Body of pancreas (tissue), 4 donors: ENCODE measurements at regions of chr19 and their contacts with region 1.

Region 1: GRCh38 chr19:44657211-44657921 is 13.7 kb downstream of the PVR start:
- DNase-seq: peak; percentile 60 to 75 (median 68)
- ATAC-seq: peak; percentile 71
- H3K4me3 ChIP-seq: no peak overlapping the region
- H3K27ac ChIP-seq: no peak overlapping the region
- H3K4me1 ChIP-seq: no peaks in the 10 kb centered on the region
- H3K27me3 ChIP-seq: no peaks in the 10 kb centered on the region
- CTCF ChIP-seq: peak; percentile 74 to 94 (median 85)
- POLR2A ChIP-seq: no peak

Region 2: DNA sequence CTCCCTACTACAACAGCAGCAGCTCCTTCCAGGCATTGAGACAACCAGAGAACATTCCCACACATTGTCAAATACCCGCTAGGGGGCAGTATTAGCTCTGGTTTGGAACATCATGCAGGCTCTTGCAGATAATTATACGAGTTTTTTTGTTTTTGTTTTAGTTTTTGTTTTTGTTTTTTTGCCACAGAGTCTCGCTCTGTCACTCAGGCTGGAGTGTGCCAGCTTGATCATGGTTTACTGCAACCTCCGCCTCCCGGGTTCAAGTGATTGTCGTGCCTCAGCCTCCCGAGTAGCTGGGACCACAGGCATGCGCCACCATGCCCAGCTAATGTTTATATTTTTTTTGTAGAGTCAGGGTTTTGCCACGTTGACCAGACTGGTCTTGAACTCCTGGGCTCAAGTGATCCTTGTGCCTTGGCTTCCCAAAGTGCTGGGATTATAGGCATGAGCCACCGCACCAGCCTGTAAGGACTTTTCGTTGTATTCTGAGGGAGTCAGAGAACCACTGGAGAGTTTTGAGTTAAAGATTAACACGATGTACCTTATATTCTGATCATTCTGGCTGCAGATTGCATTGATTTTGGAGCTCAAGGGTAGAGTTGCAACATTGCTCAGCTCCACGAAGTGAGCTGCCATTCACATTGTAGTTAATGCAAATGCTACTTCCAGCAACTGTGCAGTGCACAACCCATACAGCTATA is 86.2 kb before region 1 on chr19:
- intact Hi-C with region 1: loop called (anchors 5 kb)
- DNase-seq: peak; percentile 74 to 85 (median 79)
- ATAC-seq: peak; percentile 80
- H3K4me3 ChIP-seq: no peak overlapping the region
- H3K27ac ChIP-seq: no peak overlapping the region
- H3K4me1 ChIP-seq: no peaks in the 10 kb centered on the region
- H3K27me3 ChIP-seq: peaks cover 0 to 4% of the 10 kb centered on the region in 2 donors
- CTCF ChIP-seq: peak; percentile 53 to 83 (median 76)
- POLR2A ChIP-seq: no peak

Region 3: GRCh38 chr19:44725251-44725650 is 67.9 kb after region 1 on chr19:
- intact Hi-C with region 1: no loop called
- DNase-seq: peak; percentile 82 to 90 (median 86)
- ATAC-seq: peak; percentile 88
- H3K4me3 ChIP-seq: no peak overlapping the region
- H3K27ac ChIP-seq: peak overlapping the region; percentile 70 to 86 (median 83)
- H3K4me1 ChIP-seq: peaks cover 35% of the 10 kb centered on the region
- H3K27me3 ChIP-seq: no peaks in the 10 kb centered on the region
- CTCF ChIP-seq: peak in 2 of 7 experiments; percentile 15 to 20
- POLR2A ChIP-seq: peak in 1 of 3 donors; percentile 33